T-cell (primary cell): ENCODE measurements at regions of chr10 and their contacts with region 1.

Region 1: DNA sequence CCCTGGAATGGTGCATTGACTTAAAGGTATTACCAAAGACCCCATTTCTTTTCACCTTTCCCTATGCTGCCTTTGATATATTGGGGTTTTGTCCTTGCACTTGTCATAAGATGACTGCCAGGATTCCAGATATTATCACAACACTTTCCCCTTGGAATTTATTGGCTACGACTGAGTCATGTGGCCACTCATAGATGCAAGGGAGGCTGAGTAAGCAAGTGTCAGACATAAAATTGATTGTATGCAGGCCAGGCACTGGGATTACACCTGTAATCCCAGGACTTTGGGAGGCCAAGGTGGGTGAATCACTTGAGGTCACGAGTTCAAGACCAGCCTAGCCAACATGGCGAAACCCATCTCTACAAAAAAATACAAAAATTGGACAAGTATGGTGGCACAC is 83.6 kb downstream of the PPP1R3C start:
- DNase-seq: no peak
- ATAC-seq: no peak
- H3K4me3 ChIP-seq: no peak overlapping the region
- H3K4me3 Mint-ChIP-seq: no peak overlapping the region
- H3K27ac ChIP-seq: no peak overlapping the region
- H3K27ac Mint-ChIP-seq: no peak overlapping the region
- H3K4me1 ChIP-seq: no peaks in the 10 kb centered on the region
- H3K4me1 Mint-ChIP-seq: no peaks in the 10 kb centered on the region
- H3K27me3 ChIP-seq: peaks cover 0 to 6% of the 10 kb centered on the region in 2 experiments
- H3K27me3 Mint-ChIP-seq: peaks cover 9 to 12% of the 10 kb centered on the region in 2 donors

Region 2: GRCh38 chr10:91536111-91536510 is 13.2 kb before region 1 on chr10:
- CTCF ChIA-PET with region 1: no interaction called
- POLR2A ChIA-PET with region 1: no interaction called
- DNase-seq: no peak
- ATAC-seq: no peak
- H3K4me3 ChIP-seq: no peak overlapping the region
- H3K4me3 Mint-ChIP-seq: no peak overlapping the region
- H3K27ac ChIP-seq: no peak overlapping the region
- H3K27ac Mint-ChIP-seq: no peak overlapping the region
- H3K4me1 ChIP-seq: no peaks in the 10 kb centered on the region
- H3K4me1 Mint-ChIP-seq: no peaks in the 10 kb centered on the region
- H3K27me3 ChIP-seq: peaks cover 0 to 10% of the 10 kb centered on the region in 2 experiments
- H3K27me3 Mint-ChIP-seq: peaks cover 2 to 4% of the 10 kb centered on the region in 2 donors

Region 3: GRCh38 chr10:92342796-92343195 is 793.5 kb after region 1 on chr10:
- CTCF ChIA-PET with region 1: interaction called in 1 of 2 experiments, 10 read pairs
- POLR2A ChIA-PET with region 1: no interaction called
- DNase-seq: no peak
- ATAC-seq: no peak
- H3K4me3 ChIP-seq: no peak overlapping the region
- H3K4me3 Mint-ChIP-seq: no peak overlapping the region
- H3K27ac ChIP-seq: no peak overlapping the region
- H3K27ac Mint-ChIP-seq: peak overlapping the region in 1 of 2 donors; percentile 25
- H3K4me1 ChIP-seq: no peaks in the 10 kb centered on the region
- H3K4me1 Mint-ChIP-seq: peaks cover 3 to 5% (median 4%) of the 10 kb centered on the region in 3 donors
- H3K27me3 ChIP-seq: no peaks in the 10 kb centered on the region
- H3K27me3 Mint-ChIP-seq: no peaks in the 10 kb centered on the region